ENCODE measurements at regions of chr5 and their contacts with region 1.

Region 1: GRCh38 chr5:174872271-174872670 is 147.9 kb downstream of the MSX2 start:
- DNase-seq: no peak
- H3K4me3 ChIP-seq: no peak overlapping the region
- H3K27ac ChIP-seq: no peak overlapping the region
- H3K4me1 ChIP-seq: no peaks in the 10 kb centered on the region
- H3K27me3 ChIP-seq: no peaks in the 10 kb centered on the region
- CTCF ChIP-seq: no peak

Region 2: GRCh38 chr5:174837919-174838902 is 34.1 kb before region 1 on chr5:
- CTCF ChIA-PET with region 1: no interaction called
- dilution Hi-C with region 1: loop called (anchors 5 kb)
- in situ Hi-C with region 1: no loop called
- intact Hi-C with region 1: no loop called
- DNase-seq: peak; percentile 7
- H3K4me3 ChIP-seq: no peak overlapping the region
- H3K27ac ChIP-seq: no peak overlapping the region
- H3K4me1 ChIP-seq: no peaks in the 10 kb centered on the region
- H3K27me3 ChIP-seq: no peaks in the 10 kb centered on the region
- CTCF ChIP-seq: no peak

Region 3: DNA sequence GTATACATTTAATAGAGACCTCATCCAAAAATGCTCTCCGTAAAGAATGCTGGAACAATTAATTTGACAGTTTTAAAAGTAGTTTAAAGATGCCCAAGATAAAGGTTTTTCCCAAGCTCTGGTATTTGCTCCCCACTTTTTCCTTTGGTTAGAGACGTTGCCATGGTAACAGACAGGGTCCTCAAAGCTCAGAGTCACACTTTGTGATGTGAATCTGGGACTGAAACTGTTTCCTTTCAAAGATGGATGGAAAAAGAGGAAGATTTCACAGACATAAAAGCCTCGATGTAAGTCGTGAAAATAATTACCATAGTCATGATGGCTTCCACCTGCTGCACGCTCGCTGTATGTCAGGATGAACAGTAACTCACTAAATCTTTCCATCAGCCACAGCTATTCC is 81.6 kb after region 1 on chr5:
- CTCF ChIA-PET with region 1: no interaction called
- dilution Hi-C with region 1: no loop called
- in situ Hi-C with region 1: no loop called
- intact Hi-C with region 1: no loop called
- DNase-seq: no peak
- H3K4me3 ChIP-seq: no peak overlapping the region
- H3K27ac ChIP-seq: no peak overlapping the region
- H3K4me1 ChIP-seq: no peaks in the 10 kb centered on the region
- H3K27me3 ChIP-seq: no peaks in the 10 kb centered on the region
- CTCF ChIP-seq: no peak

Region 4: GRCh38 chr5:175305251-175305650 is 433.0 kb after region 1 on chr5:
- CTCF ChIA-PET with region 1: no interaction called
- dilution Hi-C with region 1: no loop called
- in situ Hi-C with region 1: no loop called
- intact Hi-C with region 1: no loop called
- DNase-seq: no peak
- H3K4me3 ChIP-seq: no peak overlapping the region
- H3K27ac ChIP-seq: no peak overlapping the region
- H3K4me1 ChIP-seq: no peaks in the 10 kb centered on the region
- H3K27me3 ChIP-seq: no peaks in the 10 kb centered on the region
- CTCF ChIP-seq: no peak